ENCODE measurements at regions of chr4 and their contacts with region 1.

Region 1: DNA sequence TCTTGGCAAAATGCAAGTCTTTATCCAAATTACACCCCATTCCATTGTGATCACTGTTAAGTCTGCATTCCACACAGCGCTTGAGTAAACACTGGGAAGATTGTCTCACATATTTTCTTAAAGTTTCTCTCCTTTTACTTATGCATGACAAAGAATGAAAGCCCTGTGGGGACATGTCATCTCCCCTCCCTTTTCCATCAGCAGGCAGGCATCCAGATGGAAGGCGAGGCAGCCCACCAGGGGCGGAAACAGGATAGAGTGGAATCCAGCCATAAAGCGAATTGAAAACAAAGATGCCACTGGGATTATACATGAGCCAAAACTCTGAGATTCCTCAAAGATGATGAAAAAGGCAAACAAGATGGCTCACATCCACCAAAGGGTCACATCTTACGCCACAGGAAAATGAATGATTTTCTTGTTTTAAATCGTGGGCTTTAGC is 78.2 kb downstream of the AFAP1 start:
- DNase-seq: peak; percentile 60 to 65
- H3K4me3 ChIP-seq: no peak overlapping the region
- H3K4me3 Mint-ChIP-seq: peak overlapping the region; percentile 54
- H3K27ac Mint-ChIP-seq: peak overlapping the region; percentile 92
- H3K4me1 ChIP-seq: peaks cover 44% of the 10 kb centered on the region
- H3K4me1 Mint-ChIP-seq: peaks cover 32% of the 10 kb centered on the region
- H3K27me3 ChIP-seq: no peaks in the 10 kb centered on the region
- H3K27me3 Mint-ChIP-seq: no peaks in the 10 kb centered on the region
- CTCF ChIP-seq: no peak

Region 2: GRCh38 chr4:7811536-7812191 is 49.8 kb before region 1 on chr4:
- CTCF ChIA-PET with region 1: no interaction called
- POLR2A ChIA-PET with region 1: no interaction called
- intact Hi-C with region 1: loop called (anchors 5 kb)
- DNase-seq: peak in 1 of 2 experiments; percentile 28
- H3K4me3 ChIP-seq: no peak overlapping the region
- H3K4me3 Mint-ChIP-seq: no peak overlapping the region
- H3K27ac Mint-ChIP-seq: peak overlapping the region; percentile 59
- H3K4me1 ChIP-seq: peaks cover 13% of the 10 kb centered on the region
- H3K4me1 Mint-ChIP-seq: peaks cover 15% of the 10 kb centered on the region
- H3K27me3 ChIP-seq: no peaks in the 10 kb centered on the region
- H3K27me3 Mint-ChIP-seq: no peaks in the 10 kb centered on the region
- CTCF ChIP-seq: no peak

Measured in Caco-2 (cell line).